ENCODE measurements at regions of chr5 and their contacts with region 1.

Region 1: GRCh38 chr5:34486160-34486848 is 169.8 kb upstream of the RAI14 start:
- DNase-seq: peak; percentile 91
- H3K4me3 Mint-ChIP-seq: no peak overlapping the region
- H3K27ac Mint-ChIP-seq: no peak overlapping the region
- H3K4me1 Mint-ChIP-seq: peaks cover 29% of the 10 kb centered on the region
- H3K27me3 Mint-ChIP-seq: peaks cover 4% of the 10 kb centered on the region
- CTCF ChIP-seq: peak; percentile 74

Region 2: DNA sequence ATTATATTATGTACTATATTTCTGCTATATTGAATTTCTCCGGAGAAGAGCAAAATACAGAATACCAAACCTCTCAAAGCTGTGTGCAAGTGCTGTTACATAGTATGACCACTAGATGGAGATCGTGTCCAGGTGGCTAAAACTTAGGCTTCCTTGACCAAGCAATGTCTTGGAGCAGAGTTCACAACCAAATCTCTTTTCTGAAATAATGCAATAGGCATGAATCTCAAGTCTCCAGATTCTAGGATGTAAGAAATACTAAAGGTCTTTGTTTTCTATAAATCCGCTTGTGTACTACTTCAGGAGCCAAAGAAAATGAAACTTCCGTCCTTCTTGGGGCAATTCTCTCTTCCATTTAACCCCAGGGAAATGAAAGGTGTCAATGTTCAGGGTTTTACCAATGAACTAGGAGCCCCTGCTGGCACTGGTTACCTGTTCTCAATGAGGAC is 11.7 kb before region 1 on chr5:
- CTCF ChIA-PET with region 1: interaction called, 22 read pairs
- POLR2A ChIA-PET with region 1: no interaction called
- intact Hi-C with region 1: no loop called
- DNase-seq: peak; percentile 67
- H3K4me3 Mint-ChIP-seq: no peak overlapping the region
- H3K27ac Mint-ChIP-seq: no peak overlapping the region
- H3K4me1 Mint-ChIP-seq: no peaks in the 10 kb centered on the region
- H3K27me3 Mint-ChIP-seq: peaks cover 16% of the 10 kb centered on the region
- CTCF ChIP-seq: peak; percentile 90

Region 3: DNA sequence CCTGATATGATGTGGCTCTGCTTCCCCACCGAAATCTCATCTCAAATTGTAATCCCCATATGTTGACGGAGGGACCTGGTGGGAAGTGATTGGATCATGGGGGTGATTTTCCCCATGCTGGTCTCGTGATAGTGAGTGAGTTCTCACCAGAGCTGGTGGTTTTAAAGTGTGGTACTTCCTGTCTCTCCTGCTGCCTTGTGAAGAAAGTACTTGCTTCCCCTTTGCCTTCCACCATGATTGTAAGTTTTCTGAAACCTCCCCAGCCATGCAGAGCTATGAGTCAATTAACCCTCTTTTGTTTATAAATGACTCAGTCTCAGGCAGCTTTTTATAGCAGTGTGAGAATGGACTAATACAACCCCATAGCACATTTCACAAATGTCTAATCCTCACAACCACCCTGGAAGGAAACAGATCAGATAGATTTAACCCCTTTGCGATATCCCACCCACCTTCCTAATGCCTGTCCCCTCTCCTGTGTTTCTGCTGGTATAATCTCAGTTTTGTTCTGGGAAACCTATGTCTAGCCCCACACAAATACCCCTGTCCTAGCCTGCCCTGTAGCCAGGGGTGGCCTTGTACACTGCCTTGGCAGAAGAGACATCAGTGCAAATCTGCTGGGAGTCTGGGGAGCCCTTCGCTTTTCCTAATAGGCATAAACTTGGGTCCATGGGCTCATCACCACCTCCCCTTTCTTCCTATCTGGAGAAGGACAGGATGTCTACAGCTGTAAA is 12.9 kb after region 1 on chr5:
- CTCF ChIA-PET with region 1: interaction called, 27 read pairs
- POLR2A ChIA-PET with region 1: interaction called, 6 read pairs
- intact Hi-C with region 1: no loop called
- DNase-seq: peak; percentile 80
- H3K4me3 Mint-ChIP-seq: no peak overlapping the region
- H3K27ac Mint-ChIP-seq: peak overlapping the region; percentile 35
- H3K4me1 Mint-ChIP-seq: peaks cover 19% of the 10 kb centered on the region
- H3K27me3 Mint-ChIP-seq: no peaks in the 10 kb centered on the region
- CTCF ChIP-seq: no peak

Region 4: DNA sequence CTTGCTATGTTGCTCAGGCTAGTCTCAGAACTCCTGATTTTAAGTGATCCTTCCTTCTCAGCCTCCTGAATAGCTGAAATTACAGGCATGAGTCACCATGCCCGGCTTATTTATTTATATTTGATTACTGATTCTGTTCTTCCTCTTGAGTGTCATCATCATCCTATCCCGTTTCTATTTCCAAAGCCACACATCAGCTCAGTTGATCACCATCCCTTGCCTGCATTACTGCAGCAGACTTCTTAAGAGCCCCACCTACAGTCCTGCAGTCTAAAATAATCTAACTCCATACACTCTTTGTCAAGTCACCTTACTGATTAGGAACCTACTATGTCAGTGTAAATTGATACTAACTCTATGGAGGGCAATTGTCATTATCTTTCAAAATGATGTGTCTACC is 30.9 kb after region 1 on chr5:
- CTCF ChIA-PET with region 1: interaction called, 25 read pairs
- POLR2A ChIA-PET with region 1: no interaction called
- intact Hi-C with region 1: no loop called
- DNase-seq: peak; percentile 51
- H3K4me3 Mint-ChIP-seq: no peak overlapping the region
- H3K27ac Mint-ChIP-seq: no peak overlapping the region
- H3K4me1 Mint-ChIP-seq: peaks cover 7% of the 10 kb centered on the region
- H3K27me3 Mint-ChIP-seq: no peaks in the 10 kb centered on the region
- CTCF ChIP-seq: no peak

Region 5: GRCh38 chr5:34538026-34538672 is 51.8 kb after region 1 on chr5:
- CTCF ChIA-PET with region 1: interaction called, 7 read pairs
- POLR2A ChIA-PET with region 1: no interaction called
- intact Hi-C with region 1: loop called (anchors 1 kb)
- DNase-seq: peak; percentile 54
- H3K4me3 Mint-ChIP-seq: no peak overlapping the region
- H3K27ac Mint-ChIP-seq: no peak overlapping the region
- H3K4me1 Mint-ChIP-seq: peaks cover 26% of the 10 kb centered on the region
- H3K27me3 Mint-ChIP-seq: no peaks in the 10 kb centered on the region
- CTCF ChIP-seq: no peak

Measured in MCF 10A (cell line).